ENCODE measurements at regions of chr3 and their contacts with region 1.

Region 1: GRCh38 chr3:148727247-148727646 is 29.5 kb downstream of the AGTR1 start:
- DNase-seq: peak; percentile 66
- H3K4me3 ChIP-seq: no peak overlapping the region; a peak in 1 of 4 replicates
- H3K27ac ChIP-seq: no peak overlapping the region
- H3K4me1 ChIP-seq: peaks cover 0 to 7% of the 10 kb centered on the region in 2 experiments; a peak in 2 of 4 replicates
- H3K27me3 ChIP-seq: no peaks in the 10 kb centered on the region
- CTCF ChIP-seq: peak; percentile 51
- EP300 ChIP-seq: no peak
- RAD21 ChIP-seq: peak; percentile 89

Region 2: DNA sequence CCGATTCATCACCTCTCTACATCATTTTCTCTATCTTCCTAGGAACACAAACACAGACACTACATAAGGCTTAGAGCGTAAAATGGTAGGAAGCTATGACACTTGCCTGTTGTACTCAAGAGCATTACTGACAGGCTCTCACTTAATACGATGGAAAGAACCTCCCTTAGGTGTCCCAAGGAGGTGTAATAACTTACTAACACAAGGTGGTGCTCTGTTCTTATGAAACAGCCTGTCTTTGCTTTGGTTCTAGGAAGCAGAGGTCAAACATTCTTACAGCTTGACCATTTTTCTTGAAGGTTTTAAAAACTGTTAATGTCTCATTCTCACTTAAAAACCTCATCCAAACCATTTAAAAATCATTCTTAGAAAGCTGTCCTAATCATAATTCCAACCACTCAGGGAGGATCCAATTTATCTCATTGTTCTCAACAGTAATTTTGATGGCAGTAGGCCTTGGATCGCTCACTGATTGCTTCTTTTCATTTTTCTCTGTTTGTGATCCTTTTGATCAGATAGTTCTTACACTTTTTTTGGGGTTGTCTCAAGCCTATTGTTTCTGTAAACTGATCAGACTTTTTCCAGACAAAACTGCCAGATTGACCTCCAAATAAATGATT is 347.4 kb before region 1 on chr3:
- CTCF ChIA-PET with region 1: interaction called, 99 read pairs
- POLR2A ChIA-PET with region 1: no interaction called
- DNase-seq: peak; percentile 18
- H3K4me3 ChIP-seq: no peak overlapping the region; a peak in 1 of 4 replicates
- H3K27ac ChIP-seq: no peak overlapping the region
- H3K4me1 ChIP-seq: no peaks in the 10 kb centered on the region; a peak in 1 of 4 replicates
- H3K27me3 ChIP-seq: no peaks in the 10 kb centered on the region
- CTCF ChIP-seq: peak; percentile 65
- EP300 ChIP-seq: no peak
- RAD21 ChIP-seq: peak; percentile 86

Region 3: GRCh38 chr3:148631124-148631903 is 95.9 kb before region 1 on chr3:
- CTCF ChIA-PET with region 1: no interaction called
- POLR2A ChIA-PET with region 1: no interaction called
- DNase-seq: no peak
- H3K4me3 ChIP-seq: no peak overlapping the region; a peak in 1 of 4 replicates
- H3K27ac ChIP-seq: no peak overlapping the region
- H3K4me1 ChIP-seq: no peaks in the 10 kb centered on the region
- H3K27me3 ChIP-seq: no peaks in the 10 kb centered on the region
- CTCF ChIP-seq: peak; percentile 34; the same call in 1 of the 2 replicates
- EP300 ChIP-seq: no peak
- RAD21 ChIP-seq: peak; percentile 67

Region 4: GRCh38 chr3:148861277-148861869 is 134.1 kb after region 1 on chr3:
- CTCF ChIA-PET with region 1: interaction called, 39 read pairs
- POLR2A ChIA-PET with region 1: no interaction called
- DNase-seq: peak; percentile 39
- H3K4me3 ChIP-seq: no peak overlapping the region; a peak in 1 of 4 replicates
- H3K27ac ChIP-seq: no peak overlapping the region
- H3K4me1 ChIP-seq: no peaks in the 10 kb centered on the region
- H3K27me3 ChIP-seq: no peaks in the 10 kb centered on the region
- CTCF ChIP-seq: peak; percentile 81
- EP300 ChIP-seq: no peak
- RAD21 ChIP-seq: peak; percentile 80

Region 5: GRCh38 chr3:148880681-148881080 is 153.4 kb after region 1 on chr3:
- CTCF ChIA-PET with region 1: interaction called, 24 read pairs
- POLR2A ChIA-PET with region 1: no interaction called
- DNase-seq: peak; percentile 21
- H3K4me3 ChIP-seq: no peak overlapping the region
- H3K27ac ChIP-seq: no peak overlapping the region
- H3K4me1 ChIP-seq: no peaks in the 10 kb centered on the region; a peak in 2 of 4 replicates
- H3K27me3 ChIP-seq: no peaks in the 10 kb centered on the region
- CTCF ChIP-seq: peak; percentile 28; the same call in 1 of the 2 replicates
- EP300 ChIP-seq: no peak
- RAD21 ChIP-seq: peak; percentile 69

Region 6: GRCh38 chr3:148943506-148944205 is 216.4 kb after region 1 on chr3:
- CTCF ChIA-PET with region 1: interaction called, 126 read pairs
- POLR2A ChIA-PET with region 1: no interaction called
- DNase-seq: peak; percentile 70
- H3K4me3 ChIP-seq: no peak overlapping the region
- H3K27ac ChIP-seq: no peak overlapping the region
- H3K4me1 ChIP-seq: 0 out of 4 replicates have a peak, but pooled peaks cover 0 to 4% of the 10 kb centered on the region in 2 experiments
- H3K27me3 ChIP-seq: no peaks in the 10 kb centered on the region
- CTCF ChIP-seq: peak; percentile 81
- EP300 ChIP-seq: peak; percentile 24 to 29; a peak in 2 of 4 replicates
- RAD21 ChIP-seq: peak; percentile 95

Region 7: DNA sequence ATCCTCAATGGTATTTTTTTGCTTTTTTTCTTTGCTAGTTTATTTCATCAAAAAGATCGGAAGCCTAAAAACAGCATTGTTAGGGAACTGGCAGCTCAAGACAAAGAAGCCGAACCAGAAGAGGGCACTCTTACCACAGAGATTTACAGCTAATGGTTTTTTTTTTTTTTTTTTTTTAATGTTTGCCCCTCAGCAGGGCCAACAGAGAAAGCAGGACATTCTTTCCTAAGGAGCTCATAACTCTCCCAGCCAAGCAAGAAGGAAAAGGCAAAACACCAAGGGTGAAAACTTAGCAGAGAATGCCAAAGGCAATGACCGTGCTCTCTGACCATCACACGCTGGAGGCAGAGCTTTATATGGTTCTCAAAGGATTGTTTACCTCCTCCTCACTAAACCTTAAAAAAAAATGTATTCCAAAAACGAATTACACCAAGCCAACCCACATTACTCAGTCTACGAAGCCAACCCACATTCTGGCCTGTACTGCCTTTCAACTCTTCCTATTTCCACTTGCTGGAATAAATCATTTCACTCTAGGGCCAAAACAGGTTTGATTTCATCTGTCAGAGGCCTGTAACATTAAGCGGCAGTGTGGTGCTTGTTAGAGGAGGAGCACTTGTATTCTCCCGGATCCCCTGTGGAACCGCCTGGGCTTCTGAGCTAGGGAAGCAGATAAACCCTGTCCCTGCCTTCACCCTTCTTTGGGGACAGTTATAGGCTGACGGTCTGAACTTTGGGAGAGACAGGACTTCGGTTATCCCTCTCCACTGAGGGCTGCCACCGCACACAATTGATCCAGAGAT is 228.5 kb after region 1 on chr3:
- CTCF ChIA-PET with region 1: interaction called, 16 read pairs
- POLR2A ChIA-PET with region 1: no interaction called
- DNase-seq: peak; percentile 50
- H3K4me3 ChIP-seq: no peak overlapping the region
- H3K27ac ChIP-seq: peak overlapping the region in 1 of 2 experiments; percentile 77; a peak in 2 of 4 replicates
- H3K4me1 ChIP-seq: no peaks in the 10 kb centered on the region
- H3K27me3 ChIP-seq: no peaks in the 10 kb centered on the region
- CTCF ChIP-seq: peak; percentile 77
- EP300 ChIP-seq: no peak
- RAD21 ChIP-seq: peak; percentile 85

Region 8: DNA sequence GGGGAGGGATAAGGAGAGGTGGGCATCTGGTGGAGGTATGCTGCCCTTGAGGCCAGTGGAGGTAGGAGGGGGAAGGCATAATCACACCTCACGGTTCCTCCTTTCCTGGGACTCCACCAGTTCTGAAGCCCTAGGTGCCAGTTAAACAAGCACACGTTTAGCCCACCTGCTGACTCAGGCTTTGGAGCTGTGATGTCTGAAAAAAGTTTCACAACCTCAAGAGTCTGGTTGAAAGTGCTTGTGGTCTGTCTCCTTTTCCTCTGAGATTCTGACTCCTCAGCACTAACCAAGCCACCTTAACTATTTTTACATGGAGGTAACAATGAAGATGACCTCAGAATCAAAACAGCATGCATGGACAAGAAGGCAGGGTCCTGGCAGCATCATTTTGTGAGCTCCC is 425.2 kb after region 1 on chr3:
- CTCF ChIA-PET with region 1: no interaction called
- POLR2A ChIA-PET with region 1: no interaction called
- DNase-seq: no peak
- H3K4me3 ChIP-seq: no peak overlapping the region
- H3K27ac ChIP-seq: peak overlapping the region; percentile 28 to 85; a peak in 3 of 4 replicates
- H3K4me1 ChIP-seq: peaks cover 0 to 23% of the 10 kb centered on the region in 2 experiments; a peak in 2 of 4 replicates
- H3K27me3 ChIP-seq: no peaks in the 10 kb centered on the region
- CTCF ChIP-seq: no peak
- EP300 ChIP-seq: no peak
- RAD21 ChIP-seq: no peak

Region 9: DNA sequence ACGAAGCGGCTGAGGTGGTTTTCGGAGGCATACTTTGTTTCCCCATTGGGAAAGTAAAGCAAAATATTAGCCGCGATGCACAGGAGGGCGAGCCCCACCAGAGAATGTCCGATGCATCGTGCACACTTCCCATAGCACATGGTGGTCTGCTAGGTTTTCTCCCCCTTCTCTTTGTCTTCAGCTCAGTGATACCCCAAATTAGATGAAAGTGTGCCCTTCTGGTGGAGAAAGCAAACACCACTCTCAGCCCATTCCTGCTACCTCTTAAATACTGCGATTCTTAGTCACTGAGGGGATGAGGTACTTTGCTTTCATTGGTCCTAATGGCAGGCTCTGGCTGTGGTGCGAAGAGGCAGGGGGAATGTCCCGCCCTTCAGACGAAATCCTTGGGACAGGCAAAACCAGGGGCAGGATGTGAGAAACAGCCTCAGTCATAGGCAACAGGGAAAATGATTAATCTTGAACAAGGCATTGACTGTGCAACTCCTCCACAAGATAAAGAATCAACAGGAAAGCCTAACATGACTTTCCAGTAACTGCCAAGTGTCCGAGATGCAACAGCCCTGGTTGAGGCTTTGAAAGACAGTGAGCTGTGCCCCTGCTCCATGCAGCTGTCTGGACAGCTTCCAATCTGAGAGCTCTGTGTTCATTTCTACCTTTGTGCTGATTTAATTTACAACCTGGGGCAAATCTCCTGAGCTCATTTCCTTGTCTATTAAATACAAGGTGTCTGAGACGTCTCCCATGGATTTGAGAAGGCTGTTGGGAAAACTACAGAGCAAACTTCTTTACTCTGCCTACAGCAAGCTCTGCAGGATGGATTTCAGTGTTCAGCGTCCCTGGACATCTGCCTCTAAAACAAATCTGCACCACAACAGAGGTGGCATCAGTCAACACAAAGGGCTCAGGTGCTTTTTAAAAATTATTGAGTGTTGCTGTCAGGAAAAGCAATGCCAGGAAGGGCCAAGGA is 650.4 kb after region 1 on chr3 and contains the start of gene TM4SF1:
- CTCF ChIA-PET with region 1: no interaction called
- POLR2A ChIA-PET with region 1: no interaction called
- DNase-seq: no peak
- H3K4me3 ChIP-seq: peak within 1 kb of the TSS; percentile 50 to 61
- H3K27ac ChIP-seq: peak within 1 kb of the TSS; percentile 86 to 91
- H3K4me1 ChIP-seq: peaks cover 21 to 22% of the 10 kb centered on the region in 2 experiments; a peak in 3 of 4 replicates
- H3K27me3 ChIP-seq: no peaks in the 10 kb centered on the region
- CTCF ChIP-seq: 0 out of 2 replicates have a peak, but pooled peaks have one; percentile 12
- EP300 ChIP-seq: peak; percentile 22 to 62; a peak in 2 of 4 replicates
- RAD21 ChIP-seq: no peak
- polyA plus RNA-seq, gene TM4SF1: 209 and 257 TPM in 2 replicates